ENCODE measurements at regions of chr2 and their contacts with region 1.

Region 1: GRCh38 chr2:119290859-119291587 is 67.4 kb downstream of the STEAP3 start:
- DNase-seq: peak; percentile 70
- H3K4me3 ChIP-seq: no peak overlapping the region
- H3K27ac ChIP-seq: no peak overlapping the region
- H3K4me1 ChIP-seq: no peaks in the 10 kb centered on the region
- CTCF ChIP-seq: peak; percentile 82

Region 2: GRCh38 chr2:119028327-119029174 is 262.5 kb before region 1 on chr2:
- CTCF ChIA-PET with region 1: no interaction called
- POLR2A ChIA-PET with region 1: no interaction called
- intact Hi-C with region 1: loop called (anchors 2 kb)
- DNase-seq: peak; percentile 27
- H3K4me3 ChIP-seq: no peak overlapping the region
- H3K27ac ChIP-seq: no peak overlapping the region
- H3K4me1 ChIP-seq: no peaks in the 10 kb centered on the region
- CTCF ChIP-seq: peak; percentile 76

Measured in OCI-LY7 (cell line).